Activated naive CD4-positive, alpha-beta T cell treated with anti-CD3 and anti-CD28 coated beads for 36 hours (primary cell): ENCODE measurements at regions of chr17 and their contacts with region 1.

Region 1: DNA sequence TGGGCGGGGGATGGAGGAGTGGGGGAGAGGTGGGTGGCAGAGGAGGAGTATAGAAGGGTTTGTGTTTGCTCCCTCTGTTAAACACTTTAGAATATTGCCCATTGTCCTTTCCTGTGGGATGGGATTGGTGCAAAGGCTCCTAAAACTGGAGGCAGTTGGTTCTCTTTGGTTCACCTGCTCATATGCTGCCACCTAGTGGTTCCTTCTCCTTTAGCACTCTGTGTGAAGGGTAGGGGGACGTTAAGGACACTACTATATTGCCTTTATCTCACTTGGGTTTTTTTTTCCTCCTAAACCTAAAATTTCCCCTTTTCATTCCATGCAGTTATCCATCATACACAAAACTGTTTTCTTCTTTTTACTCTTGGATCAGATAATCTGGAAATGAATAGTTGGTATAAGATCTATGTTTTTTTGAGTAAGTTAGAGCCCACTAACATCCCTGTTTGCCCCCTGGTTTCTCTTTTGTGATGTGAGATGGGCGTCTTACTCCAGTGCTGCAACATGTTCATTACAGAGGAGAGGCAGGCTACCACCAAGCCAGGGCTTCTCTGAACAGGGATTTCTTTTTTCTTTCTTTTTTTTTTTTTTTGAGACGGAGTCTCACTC is 23.8 kb downstream of the SNX11 start:
- DNase-seq: peak; percentile 75
- H3K4me3 Mint-ChIP-seq: no peak overlapping the region
- H3K27ac Mint-ChIP-seq: no peak overlapping the region
- H3K4me1 Mint-ChIP-seq: no peaks in the 10 kb centered on the region
- H3K27me3 Mint-ChIP-seq: no peaks in the 10 kb centered on the region

Region 2: GRCh38 chr17:48113201-48113676 is 18.1 kb before region 1 on chr17:
- CTCF ChIA-PET with region 1: interaction called, 6 read pairs
- intact Hi-C with region 1: loop called (anchors 2 kb)
- DNase-seq: peak; percentile 79
- H3K4me3 Mint-ChIP-seq: peak overlapping the region; percentile 46
- H3K27ac Mint-ChIP-seq: peak overlapping the region; percentile 94
- H3K4me1 Mint-ChIP-seq: peaks cover 46% of the 10 kb centered on the region
- H3K27me3 Mint-ChIP-seq: no peaks in the 10 kb centered on the region